PC-3 (cell line): ENCODE measurements at regions of chr3 and their contacts with region 1.

Region 1: DNA sequence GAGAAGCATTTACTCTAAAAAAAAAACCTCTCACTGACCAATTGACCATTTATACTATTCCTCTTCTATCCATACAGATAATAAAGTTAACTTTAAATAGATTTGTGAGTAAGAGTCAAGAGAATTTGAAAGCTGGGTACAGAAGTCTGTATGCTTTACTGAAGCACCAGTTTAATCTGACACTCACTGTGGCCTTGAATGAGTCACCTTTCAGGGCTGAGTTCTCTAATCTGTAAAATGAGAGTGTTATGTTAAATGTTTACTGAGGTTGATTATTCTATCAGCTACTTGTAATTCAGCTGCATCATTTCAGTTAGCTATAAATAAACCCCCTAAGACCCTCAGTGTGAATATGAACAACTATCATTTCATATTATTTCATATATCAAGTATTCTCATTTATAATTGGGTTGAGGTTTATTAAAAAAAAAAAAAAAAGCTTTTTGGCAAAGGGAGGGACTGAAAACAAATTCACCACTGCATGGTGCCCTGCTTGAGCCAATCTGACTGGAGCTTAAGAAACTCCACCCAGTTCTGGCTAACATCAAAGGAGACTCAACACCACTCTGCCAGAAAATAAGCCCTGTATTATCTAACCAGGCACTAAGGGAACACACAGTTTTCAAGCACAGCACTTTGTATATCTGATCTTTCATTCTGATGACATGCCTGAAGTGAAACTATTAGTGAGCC is 2.8 kb downstream of the MAP4 start:
- DNase-seq: peak; percentile 74
- ATAC-seq: peak; percentile 91
- H3K4me3 ChIP-seq: no peak overlapping the region
- H3K27ac ChIP-seq: no peak overlapping the region
- H3K4me1 ChIP-seq: peaks cover 27% of the 10 kb centered on the region
- H3K27me3 ChIP-seq: no peaks in the 10 kb centered on the region
- CTCF ChIP-seq: no peak

Region 2: DNA sequence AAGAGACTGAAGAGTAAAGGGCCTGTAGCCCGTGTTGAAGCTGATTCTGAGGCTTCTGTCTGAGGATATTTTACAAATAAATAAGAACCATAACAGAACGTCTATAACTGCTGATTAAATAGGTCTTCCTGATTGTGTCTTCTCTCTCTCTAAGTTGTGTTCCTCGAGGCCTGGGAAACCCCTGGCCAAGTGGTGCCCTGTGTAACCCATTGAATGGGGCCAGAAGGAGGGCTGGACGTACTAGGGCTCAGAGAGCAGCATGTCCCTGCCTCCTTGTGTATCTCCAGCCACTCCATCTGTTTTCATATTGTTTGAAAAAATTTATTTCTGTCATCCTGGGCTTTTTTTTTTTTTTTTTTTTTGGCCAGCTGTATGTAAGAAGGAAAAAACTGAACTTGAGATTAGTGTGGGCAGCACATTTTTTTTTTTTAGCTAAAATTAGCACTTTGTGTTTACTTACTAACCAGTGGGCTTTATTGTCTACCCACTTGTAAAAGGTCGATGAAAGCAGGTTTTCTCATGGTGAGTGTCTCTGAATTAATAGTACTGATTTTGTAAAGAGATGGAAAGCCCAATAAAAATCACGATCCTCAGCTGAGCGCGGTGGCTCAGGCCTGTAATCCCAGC is 199.8 kb before region 1 on chr3:
- CTCF ChIA-PET with region 1: no interaction called
- POLR2A ChIA-PET with region 1: no interaction called
- intact Hi-C with region 1: no loop called
- DNase-seq: no peak
- ATAC-seq: no peak
- H3K4me3 ChIP-seq: no peak overlapping the region
- H3K27ac ChIP-seq: no peak overlapping the region
- H3K4me1 ChIP-seq: no peaks in the 10 kb centered on the region
- H3K27me3 ChIP-seq: no peaks in the 10 kb centered on the region
- CTCF ChIP-seq: no peak

Region 3: GRCh38 chr3:48034000-48034516 is 20.6 kb after region 1 on chr3:
- CTCF ChIA-PET with region 1: no interaction called
- POLR2A ChIA-PET with region 1: interaction called, 50 read pairs
- intact Hi-C with region 1: no loop called
- DNase-seq: peak; percentile 66
- ATAC-seq: peak; percentile 89
- H3K4me3 ChIP-seq: no peak overlapping the region
- H3K27ac ChIP-seq: peak overlapping the region; percentile 20
- H3K4me1 ChIP-seq: peaks cover 18% of the 10 kb centered on the region
- H3K27me3 ChIP-seq: no peaks in the 10 kb centered on the region
- CTCF ChIP-seq: no peak

Region 4: GRCh38 chr3:48088749-48089466 is 75.5 kb after region 1 on chr3:
- CTCF ChIA-PET with region 1: no interaction called
- POLR2A ChIA-PET with region 1: interaction called, 15 read pairs
- intact Hi-C with region 1: loop called (anchors 5 kb)
- DNase-seq: peak; percentile 98
- ATAC-seq: peak; percentile 87
- H3K4me3 ChIP-seq: peak overlapping the region; percentile 84
- H3K27ac ChIP-seq: peak overlapping the region; percentile 97
- H3K4me1 ChIP-seq: peaks cover 32% of the 10 kb centered on the region
- H3K27me3 ChIP-seq: no peaks in the 10 kb centered on the region
- CTCF ChIP-seq: no peak